Heart left ventricle (tissue), 16 donors: ENCODE measurements at regions of chr4 and their contacts with region 1.

Region 1: GRCh38 chr4:72302981-72303704 is 265.9 kb downstream of the ADAMTS3 start:
- DNase-seq: no peak
- ATAC-seq: peak in 2 of 4 donors; percentile 57 to 64
- H3K4me3 ChIP-seq: no peak overlapping the region
- H3K27ac ChIP-seq: no peak overlapping the region
- H3K4me1 ChIP-seq: no peaks in the 10 kb centered on the region
- H3K27me3 ChIP-seq: peaks cover 0 to 3% (median 0%) of the 10 kb centered on the region in 9 donors
- CTCF ChIP-seq: peak; percentile 47 to 73 (median 64)
- POLR2A ChIP-seq: no peak

Region 2: DNA sequence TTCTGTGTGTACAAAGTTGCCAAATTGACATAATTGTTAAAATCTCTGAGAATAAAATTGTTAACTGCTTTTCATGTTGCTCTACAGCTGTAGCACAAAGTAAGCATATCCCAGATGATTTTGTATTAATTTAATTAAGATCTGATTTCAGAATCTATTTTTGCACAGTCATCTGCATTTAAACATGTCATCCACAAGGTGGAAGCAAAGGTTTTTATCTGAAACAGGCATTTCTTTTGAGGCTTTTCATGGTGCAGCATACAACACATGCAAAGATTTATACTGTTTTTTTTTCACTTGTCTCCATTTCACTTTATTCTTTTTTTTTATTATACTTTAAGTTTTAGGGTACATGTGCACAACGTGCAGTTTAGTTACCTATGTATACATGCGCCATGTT is 570.4 kb before region 1 on chr4:
- intact Hi-C with region 1: loop called in 1 of 10 experiments (anchors 5 kb)
- DNase-seq: no peak
- ATAC-seq: no peak
- H3K4me3 ChIP-seq: no peak overlapping the region
- H3K27ac ChIP-seq: no peak overlapping the region
- H3K4me1 ChIP-seq: no peaks in the 10 kb centered on the region
- H3K27me3 ChIP-seq: no peaks in the 10 kb centered on the region
- CTCF ChIP-seq: peak in 10 of 12 donors; percentile 6 to 37 (median 24)
- POLR2A ChIP-seq: no peak

Region 3: DNA sequence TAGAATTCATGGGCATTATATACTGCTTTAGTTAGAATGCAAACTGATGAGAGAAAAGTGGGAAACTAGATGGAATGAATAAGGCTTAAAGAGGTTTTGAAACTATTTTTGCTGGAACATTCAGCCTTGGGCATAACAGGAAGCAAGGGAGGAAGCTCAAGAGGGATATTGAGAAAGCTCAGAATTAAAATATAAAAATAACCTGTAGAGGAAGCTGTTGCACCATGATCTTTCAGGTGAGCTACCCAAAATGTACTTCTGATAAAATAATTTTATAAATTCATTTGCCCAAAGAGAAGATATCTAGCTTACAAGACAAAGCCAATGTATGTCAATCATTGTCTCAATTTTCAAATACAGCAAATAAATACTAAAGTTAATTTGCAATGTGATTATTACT is 530.6 kb before region 1 on chr4:
- intact Hi-C with region 1: loop called in 1 of 10 experiments (anchors 10 kb)
- DNase-seq: no peak
- ATAC-seq: no peak
- H3K4me3 ChIP-seq: no peak overlapping the region
- H3K27ac ChIP-seq: no peak overlapping the region
- H3K4me1 ChIP-seq: no peaks in the 10 kb centered on the region
- H3K27me3 ChIP-seq: peaks cover 0 to 5% (median 0%) of the 10 kb centered on the region in 9 donors
- CTCF ChIP-seq: peak in 2 of 12 donors; percentile 9 to 16
- POLR2A ChIP-seq: no peak

Region 4: DNA sequence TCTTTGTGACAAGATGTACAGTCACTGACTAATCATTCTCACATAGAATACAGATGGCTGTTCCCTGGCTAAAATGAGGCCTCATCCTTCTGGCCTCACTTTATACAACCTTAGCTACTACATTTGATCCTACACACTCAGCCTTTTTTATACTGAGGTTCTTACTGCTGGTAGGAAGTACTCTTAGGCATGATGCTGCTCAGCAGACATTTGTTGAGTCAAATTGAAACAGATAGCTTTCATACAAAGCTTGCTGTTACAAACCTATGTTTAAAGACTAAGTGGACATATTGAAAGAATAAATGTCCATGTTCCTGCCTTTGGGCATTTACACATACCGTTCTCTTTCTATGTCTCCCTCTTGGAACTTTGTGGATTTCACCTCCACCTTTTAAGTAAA is 116.4 kb before region 1 on chr4:
- intact Hi-C with region 1: no loop called
- DNase-seq: no peak
- ATAC-seq: no peak
- H3K4me3 ChIP-seq: no peak overlapping the region
- H3K27ac ChIP-seq: no peak overlapping the region
- H3K4me1 ChIP-seq: no peaks in the 10 kb centered on the region
- H3K27me3 ChIP-seq: no peaks in the 10 kb centered on the region
- CTCF ChIP-seq: no peak
- POLR2A ChIP-seq: no peak

Region 5: GRCh38 chr4:72390409-72390808 is 87.3 kb after region 1 on chr4:
- intact Hi-C with region 1: no loop called
- DNase-seq: no peak
- ATAC-seq: peak in 2 of 4 donors; percentile 39 to 77
- H3K4me3 ChIP-seq: no peak overlapping the region
- H3K27ac ChIP-seq: no peak overlapping the region
- H3K4me1 ChIP-seq: peaks cover 0 to 16% (median 5%) of the 10 kb centered on the region in 12 donors
- H3K27me3 ChIP-seq: no peaks in the 10 kb centered on the region
- CTCF ChIP-seq: no peak
- POLR2A ChIP-seq: no peak